Naive thymus-derived CD4-positive, alpha-beta T cell (primary cell): ENCODE measurements at regions of chr2 and their contacts with region 1.

Region 1: DNA sequence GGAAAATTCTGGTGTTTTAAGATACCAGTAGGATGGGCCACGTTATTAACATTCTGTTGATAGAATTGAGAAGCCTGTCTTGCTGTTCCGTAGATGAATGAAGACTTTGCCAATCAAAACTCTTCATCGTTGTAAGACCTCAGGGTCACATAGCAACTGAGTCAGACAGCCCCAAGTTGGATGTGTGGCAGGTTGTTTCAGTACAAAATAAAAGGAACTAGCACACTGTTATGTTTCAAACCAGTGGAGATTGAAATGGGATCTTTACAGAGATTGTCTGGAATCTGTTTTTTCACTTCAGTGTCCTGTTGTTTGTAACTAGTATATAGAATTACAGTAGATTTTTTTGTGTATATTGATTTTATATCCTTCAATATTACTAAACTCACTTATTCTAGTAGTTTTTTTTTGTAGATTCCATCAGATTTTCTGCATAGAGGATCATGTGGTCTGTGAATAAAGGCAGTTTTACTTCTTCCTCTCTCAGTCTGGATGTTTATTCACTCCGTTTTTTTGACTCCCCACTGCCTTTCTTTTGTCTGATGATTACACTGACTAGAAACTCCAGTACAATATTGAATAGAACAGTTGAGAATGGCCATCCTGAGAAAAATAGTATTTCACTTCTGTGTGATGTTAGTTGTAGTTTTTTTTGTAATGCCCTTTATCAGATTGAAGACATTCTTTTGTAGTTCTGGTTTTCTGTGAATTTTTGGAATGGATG is 22.7 kb downstream of the EPC2 start:
- DNase-seq: no peak
- ATAC-seq: peak; percentile 54
- H3K4me3 ChIP-seq: no peak overlapping the region
- H3K4me3 Mint-ChIP-seq: peak overlapping the region in 9 of 10 donors; percentile 35 to 78 (median 67)
- H3K27ac ChIP-seq: no peak overlapping the region
- H3K27ac Mint-ChIP-seq: peak overlapping the region in 7 of 9 donors; percentile 28 to 85 (median 58)
- H3K4me1 ChIP-seq: peaks cover 10 to 42% of the 10 kb centered on the region in 2 donors
- H3K4me1 Mint-ChIP-seq: peaks cover 46 to 96% (median 85%) of the 10 kb centered on the region in 7 donors
- H3K27me3 ChIP-seq: no peaks in the 10 kb centered on the region
- H3K27me3 Mint-ChIP-seq: no peaks in the 10 kb centered on the region

Region 2: DNA sequence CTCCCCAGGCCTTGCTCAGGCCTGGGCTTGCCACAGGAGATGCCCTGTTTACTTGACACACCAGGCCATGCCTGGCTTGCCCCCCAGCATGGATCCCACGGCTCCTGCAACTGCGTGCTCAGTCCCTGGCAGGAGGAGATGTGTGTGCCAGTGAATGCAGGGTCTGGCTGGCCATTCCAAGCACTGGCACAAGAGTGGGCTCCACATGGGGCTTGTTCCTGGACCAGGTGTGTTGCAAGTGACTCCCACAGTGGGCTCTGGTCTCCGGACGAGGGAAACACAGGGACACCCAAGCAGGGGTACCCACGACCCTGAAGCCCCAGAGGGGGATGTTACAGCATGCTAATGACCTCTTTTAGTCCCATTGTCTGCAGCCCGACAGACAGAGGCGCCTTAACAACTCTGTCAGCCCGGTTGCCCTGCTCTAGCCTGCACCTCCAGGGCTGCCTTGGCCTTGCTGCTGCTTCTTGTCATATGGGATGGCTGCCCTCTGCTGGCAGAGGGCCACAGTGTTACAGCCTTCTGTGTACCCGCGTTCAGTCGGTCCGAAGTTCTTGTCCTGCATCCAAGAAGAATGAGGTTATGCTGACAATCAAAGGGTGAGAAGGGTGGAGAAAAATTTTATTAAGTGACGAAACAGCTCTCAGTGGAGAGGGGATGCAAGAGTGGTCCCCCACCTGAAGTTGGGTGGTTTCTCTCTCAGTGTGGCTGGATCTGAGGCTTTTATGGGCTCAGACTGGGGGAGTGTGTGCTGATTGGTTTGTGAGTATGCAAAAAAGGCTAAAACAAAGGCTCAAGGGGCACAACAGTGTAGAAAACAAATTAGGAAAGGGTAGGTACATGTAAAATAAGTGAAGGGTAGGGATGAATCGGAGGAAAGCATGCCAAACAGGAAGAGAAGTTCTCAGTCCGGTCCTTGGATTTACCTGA is 465.9 kb before region 1 on chr2:
- CTCF ChIA-PET with region 1: no interaction called
- POLR2A ChIA-PET with region 1: no interaction called
- intact Hi-C with region 1: no loop called
- DNase-seq: peak in 8 of 9 donors; percentile 2 to 41 (median 24)
- ATAC-seq: peak; percentile 61
- H3K4me3 ChIP-seq: no peak overlapping the region
- H3K4me3 Mint-ChIP-seq: no peak overlapping the region
- H3K27ac ChIP-seq: no peak overlapping the region
- H3K27ac Mint-ChIP-seq: no peak overlapping the region
- H3K4me1 ChIP-seq: no peaks in the 10 kb centered on the region
- H3K4me1 Mint-ChIP-seq: peaks cover 0 to 7% (median 0%) of the 10 kb centered on the region in 7 donors
- H3K27me3 ChIP-seq: no peaks in the 10 kb centered on the region
- H3K27me3 Mint-ChIP-seq: no peaks in the 10 kb centered on the region

Region 3: DNA sequence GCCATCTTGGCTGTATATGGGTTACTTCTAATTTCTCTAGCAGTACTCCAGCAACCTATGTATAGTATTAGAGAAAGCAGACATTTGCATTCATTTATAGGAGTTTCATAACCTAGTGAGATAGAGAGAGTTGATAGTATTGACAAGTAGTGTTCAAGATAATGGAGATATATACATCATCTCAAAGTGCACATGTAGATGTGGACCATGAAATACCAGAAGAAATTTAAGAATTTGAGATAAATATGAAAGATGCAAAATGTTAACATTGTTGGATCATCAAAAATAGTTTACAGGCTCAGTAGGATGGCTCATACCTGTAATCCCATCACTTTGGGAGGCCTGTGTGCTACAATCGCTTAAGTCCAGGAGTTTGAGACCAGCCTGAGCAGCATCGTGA is 403.4 kb before region 1 on chr2:
- CTCF ChIA-PET with region 1: no interaction called
- POLR2A ChIA-PET with region 1: no interaction called
- intact Hi-C with region 1: no loop called
- DNase-seq: no peak
- ATAC-seq: no peak
- H3K4me3 ChIP-seq: no peak overlapping the region
- H3K4me3 Mint-ChIP-seq: no peak overlapping the region
- H3K27ac ChIP-seq: no peak overlapping the region
- H3K27ac Mint-ChIP-seq: no peak overlapping the region
- H3K4me1 ChIP-seq: no peaks in the 10 kb centered on the region
- H3K4me1 Mint-ChIP-seq: peaks cover 0 to 7% (median 0%) of the 10 kb centered on the region in 7 donors
- H3K27me3 ChIP-seq: no peaks in the 10 kb centered on the region
- H3K27me3 Mint-ChIP-seq: peaks cover 0 to 2% (median 0%) of the 10 kb centered on the region in 5 donors

Region 4: GRCh38 chr2:148653437-148653836 is 13.8 kb before region 1 on chr2:
- CTCF ChIA-PET with region 1: no interaction called
- POLR2A ChIA-PET with region 1: no interaction called
- intact Hi-C with region 1: loop called in 1 of 2 experiments (anchors 2 kb)
- DNase-seq: no peak
- ATAC-seq: peak; percentile 30
- H3K4me3 ChIP-seq: no peak overlapping the region
- H3K4me3 Mint-ChIP-seq: peak overlapping the region; percentile 9 to 83 (median 70)
- H3K27ac ChIP-seq: no peak overlapping the region
- H3K27ac Mint-ChIP-seq: peak overlapping the region in 2 of 9 donors; percentile 43 to 75
- H3K4me1 ChIP-seq: peaks cover 57 to 67% of the 10 kb centered on the region in 2 donors
- H3K4me1 Mint-ChIP-seq: peaks cover 75 to 100% (median 97%) of the 10 kb centered on the region in 7 donors
- H3K27me3 ChIP-seq: no peaks in the 10 kb centered on the region
- H3K27me3 Mint-ChIP-seq: no peaks in the 10 kb centered on the region

Region 5: DNA sequence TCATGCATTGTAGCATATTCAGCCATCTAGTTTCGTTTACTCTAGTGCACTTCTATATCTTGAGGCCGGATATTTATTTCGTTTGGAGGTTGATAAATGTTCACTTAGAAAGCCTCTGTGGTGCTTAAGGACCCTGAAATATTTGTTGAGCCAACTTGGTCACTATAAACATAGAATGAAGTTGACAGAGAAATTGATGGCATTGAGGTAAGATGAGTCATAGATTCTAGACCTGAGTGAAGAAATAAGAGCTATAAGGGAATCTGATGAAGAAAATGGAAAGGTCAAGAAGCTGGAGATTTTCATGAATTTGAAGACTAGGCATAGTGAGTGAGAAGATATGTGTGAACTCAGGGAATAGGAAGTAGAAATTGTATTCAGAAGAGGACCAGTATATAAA is 13.2 kb after region 1 on chr2:
- CTCF ChIA-PET with region 1: no interaction called
- POLR2A ChIA-PET with region 1: interaction called, 3 read pairs
- intact Hi-C with region 1: loop called in 1 of 2 experiments (anchors 2 kb)
- DNase-seq: no peak
- ATAC-seq: no peak
- H3K4me3 ChIP-seq: no peak overlapping the region
- H3K4me3 Mint-ChIP-seq: peak overlapping the region in 4 of 10 donors; percentile 2 to 23 (median 8)
- H3K27ac ChIP-seq: no peak overlapping the region
- H3K27ac Mint-ChIP-seq: peak overlapping the region in 4 of 9 donors; percentile 4 to 25 (median 10)
- H3K4me1 ChIP-seq: peaks cover 3 to 16% of the 10 kb centered on the region in 2 donors
- H3K4me1 Mint-ChIP-seq: peaks cover 33 to 87% (median 73%) of the 10 kb centered on the region in 7 donors
- H3K27me3 ChIP-seq: no peaks in the 10 kb centered on the region
- H3K27me3 Mint-ChIP-seq: no peaks in the 10 kb centered on the region